Activated CD4-positive, alpha-beta memory T cell treated with anti-CD3 and anti-CD28 coated beads for 36 hours (primary cell): ENCODE measurements at regions of chr2 and their contacts with region 1.

Region 1: DNA sequence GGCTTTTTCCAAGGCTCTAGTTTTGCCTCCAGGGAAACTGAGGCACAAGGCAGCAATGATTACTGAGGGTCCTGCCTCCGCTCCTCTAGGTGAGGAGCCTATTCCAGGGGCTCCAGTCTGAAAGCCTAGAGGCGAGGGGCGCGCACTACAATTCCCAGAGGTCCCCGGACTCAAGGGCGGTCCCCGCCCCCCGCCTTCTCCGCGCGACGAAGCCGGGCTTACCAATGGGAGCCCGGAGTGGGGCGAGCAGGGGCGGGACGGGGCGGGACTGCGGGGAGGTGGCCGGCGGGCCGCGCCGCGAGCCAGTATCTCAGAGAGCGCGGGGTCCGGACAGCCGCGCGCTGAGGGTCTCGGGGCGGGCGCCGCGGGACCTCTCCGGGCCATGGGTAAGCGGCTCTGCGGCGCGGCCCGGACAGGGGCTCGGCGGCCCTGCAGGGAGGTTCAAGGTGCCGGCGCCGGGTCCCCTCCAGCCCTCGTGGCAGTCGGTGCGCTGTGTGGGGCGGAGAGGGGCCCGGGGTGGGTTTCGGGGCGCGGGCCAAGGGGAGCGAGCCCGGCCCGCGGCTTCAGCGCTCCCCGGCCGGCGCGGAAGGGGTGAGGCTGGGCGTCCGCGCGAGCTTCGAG is at the start of gene ARID5A:
- DNase-seq: peak; percentile 95
- H3K4me3 Mint-ChIP-seq: peak within 1 kb of the TSS; percentile 95
- H3K27ac Mint-ChIP-seq: peak within 1 kb of the TSS; percentile 98
- H3K4me1 Mint-ChIP-seq: peaks cover 62% of the 10 kb centered on the region
- H3K27me3 Mint-ChIP-seq: no peaks in the 10 kb centered on the region
- total RNA-seq, gene ARID5A: 260 to 266 TPM

Region 2: GRCh38 chr2:96145036-96145847 is 391.3 kb before region 1 on chr2 and contains the start of gene DUSP2:
- CTCF ChIA-PET with region 1: no interaction called
- POLR2A ChIA-PET with region 1: interaction called, 4 read pairs
- intact Hi-C with region 1: loop called (anchors 2 kb)
- DNase-seq: peak; percentile 96
- H3K4me3 Mint-ChIP-seq: peak within 1 kb of the TSS; percentile 96
- H3K27ac Mint-ChIP-seq: peak within 1 kb of the TSS; percentile 100
- H3K4me1 Mint-ChIP-seq: peaks cover 57% of the 10 kb centered on the region
- H3K27me3 Mint-ChIP-seq: peaks cover 4% of the 10 kb centered on the region
- total RNA-seq, gene DUSP2: 522 to 539 TPM

Region 3: GRCh38 chr2:96265840-96266679 is 270.5 kb before region 1 on chr2 and contains the starts of genes CIAO1 and TMEM127:
- CTCF ChIA-PET with region 1: no interaction called
- POLR2A ChIA-PET with region 1: no interaction called
- intact Hi-C with region 1: loop called (anchors 5 kb)
- DNase-seq: peak; percentile 99
- H3K4me3 Mint-ChIP-seq: peak within 1 kb of the TSS; percentile 99
- H3K27ac Mint-ChIP-seq: peak within 1 kb of the TSS; percentile 97
- H3K4me1 Mint-ChIP-seq: peaks cover 50% of the 10 kb centered on the region
- H3K27me3 Mint-ChIP-seq: no peaks in the 10 kb centered on the region
- total RNA-seq, gene CIAO1: 86.6 to 87.1 TPM
- total RNA-seq, gene TMEM127: 19.3 to 22.2 TPM

Region 4: GRCh38 chr2:96344011-96344410 is 192.5 kb before region 1 on chr2:
- CTCF ChIA-PET with region 1: no interaction called
- POLR2A ChIA-PET with region 1: interaction called, 8 read pairs
- intact Hi-C with region 1: loop called (anchors 5 kb)
- DNase-seq: peak; percentile 77
- H3K4me3 Mint-ChIP-seq: no peak overlapping the region
- H3K27ac Mint-ChIP-seq: peak overlapping the region; percentile 87
- H3K4me1 Mint-ChIP-seq: peaks cover 67% of the 10 kb centered on the region
- H3K27me3 Mint-ChIP-seq: no peaks in the 10 kb centered on the region

Region 5: DNA sequence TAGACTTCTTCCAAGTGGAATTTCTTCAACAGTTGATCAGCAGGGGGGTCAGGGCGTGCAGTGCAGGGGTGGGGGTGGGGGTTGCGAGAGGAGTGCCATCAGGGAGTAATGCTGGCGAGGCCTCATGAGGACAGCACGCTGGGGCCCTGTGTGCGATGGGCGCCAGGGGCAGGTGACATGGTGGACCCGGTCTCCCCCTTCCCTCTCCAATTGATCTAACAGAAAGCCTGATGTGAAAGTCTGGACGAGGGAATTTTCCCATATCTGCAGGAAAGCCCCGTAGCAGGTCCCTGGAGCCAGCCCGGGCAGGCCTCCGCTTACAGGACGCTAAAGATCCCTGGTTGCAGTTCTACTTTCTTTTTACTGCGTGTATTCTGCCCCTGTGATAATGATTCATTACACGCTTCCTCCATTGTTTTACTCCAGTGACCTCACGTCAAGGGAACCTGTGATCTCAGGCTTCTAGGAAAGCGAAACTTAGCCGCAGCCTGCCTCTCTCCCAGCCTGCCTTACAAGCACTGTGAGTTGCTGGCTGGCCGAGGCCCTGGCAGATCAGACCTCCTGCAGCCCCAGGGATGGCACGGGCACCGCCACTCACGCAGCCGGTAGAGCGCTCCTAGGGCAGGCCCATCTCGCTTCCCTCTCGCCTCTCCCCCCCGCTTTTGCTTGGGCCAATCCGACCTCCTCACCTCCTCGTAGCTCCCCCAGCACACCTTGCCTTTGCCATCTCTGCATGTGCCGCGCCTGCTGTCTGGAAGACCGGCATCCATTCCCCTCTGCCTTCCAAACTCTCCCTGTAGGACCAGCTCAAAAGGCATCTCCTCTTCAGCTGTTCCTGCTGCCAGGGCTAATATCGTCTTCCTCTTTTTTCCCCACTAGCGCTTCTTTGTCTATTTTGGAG is 50.6 kb before region 1 on chr2:
- CTCF ChIA-PET with region 1: no interaction called
- POLR2A ChIA-PET with region 1: interaction called, 7 read pairs
- intact Hi-C with region 1: loop called (anchors 1 kb)
- DNase-seq: peak; percentile 93
- H3K4me3 Mint-ChIP-seq: peak overlapping the region; percentile 95
- H3K27ac Mint-ChIP-seq: peak overlapping the region; percentile 99
- H3K4me1 Mint-ChIP-seq: peaks cover 47% of the 10 kb centered on the region
- H3K27me3 Mint-ChIP-seq: no peaks in the 10 kb centered on the region

Region 6: DNA sequence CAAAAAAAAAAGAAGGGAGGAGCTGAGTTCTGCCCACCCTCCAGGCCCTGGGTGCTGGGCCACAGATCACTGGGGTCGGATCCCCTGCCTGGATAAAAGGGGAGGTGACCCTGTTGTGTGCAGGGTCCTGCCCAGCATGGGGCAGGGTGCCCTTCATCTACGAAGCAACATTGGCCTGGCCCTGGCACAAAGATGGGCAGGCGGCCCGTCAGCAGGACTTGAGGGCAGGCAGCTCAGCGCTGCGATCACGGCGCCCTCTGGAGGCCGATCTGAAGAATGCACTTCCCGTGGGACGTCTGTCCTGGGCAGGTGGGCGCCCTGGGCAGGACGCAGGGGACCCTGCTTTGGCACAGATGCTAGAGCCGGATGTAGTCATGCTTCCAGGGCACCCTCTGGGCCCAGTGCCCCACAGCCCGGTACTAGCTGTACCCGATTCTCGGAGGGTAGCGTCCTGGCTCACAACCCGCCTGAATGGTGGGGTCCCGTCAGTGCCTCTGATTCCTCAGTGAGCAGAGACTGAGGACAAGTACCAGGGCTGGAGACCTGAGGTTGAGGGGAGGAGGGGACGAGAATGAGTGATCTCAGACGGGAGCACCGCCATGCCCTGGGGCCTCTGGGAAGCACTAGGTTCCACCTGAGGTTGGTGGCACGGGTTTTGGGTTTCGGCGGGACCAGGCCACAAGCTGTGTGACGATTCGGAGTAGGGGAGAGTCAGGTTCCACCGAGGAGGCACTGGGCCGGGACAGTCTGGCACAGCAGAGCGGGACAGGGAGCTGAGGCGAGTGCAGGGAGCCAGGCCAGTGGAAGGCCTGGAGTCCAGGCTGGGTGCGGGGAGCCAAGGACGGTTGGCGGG is 18.0 kb after region 1 on chr2:
- CTCF ChIA-PET with region 1: interaction called, 74 read pairs
- POLR2A ChIA-PET with region 1: interaction called, 54 read pairs
- intact Hi-C with region 1: loop called (anchors 2 kb)
- DNase-seq: peak; percentile 78
- H3K4me3 Mint-ChIP-seq: peak overlapping the region; percentile 43
- H3K27ac Mint-ChIP-seq: peak overlapping the region; percentile 77
- H3K4me1 Mint-ChIP-seq: peaks cover 41% of the 10 kb centered on the region
- H3K27me3 Mint-ChIP-seq: peaks cover 1% of the 10 kb centered on the region